ENCODE measurements at regions of chr4 and their contacts with region 1.

Region 1: DNA sequence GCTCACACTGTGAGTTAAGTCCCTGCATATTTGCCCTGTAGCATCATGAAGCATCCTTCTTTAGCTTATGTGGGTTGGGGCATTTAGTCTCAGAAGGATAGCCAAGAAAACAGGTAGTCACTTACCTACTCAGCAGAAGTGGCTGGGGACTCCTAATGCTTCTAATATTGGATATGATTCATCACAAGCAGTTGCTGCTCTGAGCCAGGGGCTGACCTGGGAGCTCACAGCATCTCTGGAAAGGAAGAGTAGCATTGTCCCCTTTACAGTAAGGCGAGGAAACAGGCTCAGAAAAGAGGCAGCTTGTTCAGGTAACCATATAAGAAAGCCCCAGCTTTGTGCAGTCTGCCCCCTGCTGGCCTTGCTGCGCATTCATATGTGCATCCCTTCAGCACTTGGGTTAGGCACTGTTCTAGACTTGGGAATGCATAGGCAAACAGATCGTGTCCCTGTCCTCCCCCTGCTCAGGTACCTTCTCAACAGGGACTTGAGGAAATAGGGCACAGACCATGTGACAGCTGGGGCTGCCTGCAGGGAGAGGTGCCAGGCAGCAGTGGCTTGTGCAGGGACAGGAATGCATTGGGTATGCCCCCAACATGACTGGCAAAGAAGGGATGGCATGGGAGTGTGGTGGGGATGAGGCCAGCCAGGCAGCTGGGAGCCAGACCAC is 35.7 kb upstream of the TBC1D14 start:
- DNase-seq: peak; percentile 86
- H3K4me3 Mint-ChIP-seq: no peak overlapping the region
- H3K27ac Mint-ChIP-seq: no peak overlapping the region
- H3K4me1 Mint-ChIP-seq: no peaks in the 10 kb centered on the region
- H3K27me3 Mint-ChIP-seq: no peaks in the 10 kb centered on the region

Region 2: GRCh38 chr4:6591313-6591712 is 282.6 kb before region 1 on chr4:
- CTCF ChIA-PET with region 1: no interaction called
- POLR2A ChIA-PET with region 1: no interaction called
- intact Hi-C with region 1: no loop called
- DNase-seq: no peak
- H3K4me3 Mint-ChIP-seq: no peak overlapping the region
- H3K27ac Mint-ChIP-seq: no peak overlapping the region
- H3K4me1 Mint-ChIP-seq: no peaks in the 10 kb centered on the region
- H3K27me3 Mint-ChIP-seq: no peaks in the 10 kb centered on the region

Region 3: GRCh38 chr4:6716018-6716911 is 157.7 kb before region 1 on chr4 and contains the start of gene BLOC1S4:
- CTCF ChIA-PET with region 1: interaction called, 252 read pairs
- POLR2A ChIA-PET with region 1: interaction called, 4 read pairs
- intact Hi-C with region 1: loop called (anchors 1 kb)
- DNase-seq: peak; percentile 92
- H3K4me3 Mint-ChIP-seq: peak within 1 kb of the TSS; percentile 90
- H3K27ac Mint-ChIP-seq: peak within 1 kb of the TSS; percentile 97
- H3K4me1 Mint-ChIP-seq: peaks cover 27% of the 10 kb centered on the region
- H3K27me3 Mint-ChIP-seq: peaks cover 3% of the 10 kb centered on the region
- total RNA-seq, gene BLOC1S4: 17.0 to 19.7 TPM

Region 4: GRCh38 chr4:6783053-6783981 is 90.6 kb before region 1 on chr4:
- CTCF ChIA-PET with region 1: interaction called, 27 read pairs
- POLR2A ChIA-PET with region 1: interaction called, 5 read pairs
- intact Hi-C with region 1: loop called (anchors 1 kb)
- DNase-seq: peak; percentile 94
- H3K4me3 Mint-ChIP-seq: peak overlapping the region; percentile 80
- H3K27ac Mint-ChIP-seq: peak overlapping the region; percentile 77
- H3K4me1 Mint-ChIP-seq: peaks cover 47% of the 10 kb centered on the region
- H3K27me3 Mint-ChIP-seq: no peaks in the 10 kb centered on the region

Region 5: DNA sequence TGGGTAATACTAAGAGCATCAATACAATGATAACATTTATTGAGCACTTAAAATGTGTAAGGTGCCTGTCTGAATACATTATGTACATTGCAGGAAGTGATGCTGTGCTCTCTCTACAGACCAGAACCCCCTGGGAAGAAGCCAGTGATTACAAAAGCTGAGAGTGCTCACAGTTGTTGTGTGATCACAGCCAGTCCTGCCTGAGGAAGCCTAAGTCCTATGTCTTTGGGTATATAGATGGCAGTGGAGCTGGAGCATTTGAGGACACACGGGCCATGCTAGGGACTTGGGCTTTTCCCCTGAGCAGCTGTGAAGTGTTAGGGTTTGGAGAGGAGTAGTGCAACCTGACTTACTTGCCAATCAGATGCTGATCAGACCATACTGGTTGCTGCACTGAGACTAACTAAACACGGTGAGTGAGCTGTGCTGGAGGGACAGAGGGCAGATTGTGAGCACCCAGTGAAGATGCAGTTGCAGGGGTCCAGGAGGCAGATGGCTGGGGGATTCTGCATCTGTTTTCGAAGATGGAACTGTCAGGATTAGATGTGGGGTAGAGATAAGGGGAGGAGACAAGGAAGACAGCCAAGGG is 25.1 kb before region 1 on chr4:
- CTCF ChIA-PET with region 1: interaction called, 19 read pairs
- POLR2A ChIA-PET with region 1: no interaction called
- intact Hi-C with region 1: no loop called
- DNase-seq: no peak
- H3K4me3 Mint-ChIP-seq: no peak overlapping the region
- H3K27ac Mint-ChIP-seq: no peak overlapping the region
- H3K4me1 Mint-ChIP-seq: peaks cover 11% of the 10 kb centered on the region
- H3K27me3 Mint-ChIP-seq: no peaks in the 10 kb centered on the region

Region 6: GRCh38 chr4:6892190-6892908 is 18.4 kb after region 1 on chr4:
- CTCF ChIA-PET with region 1: interaction called, 46 read pairs
- POLR2A ChIA-PET with region 1: no interaction called
- intact Hi-C with region 1: no loop called
- DNase-seq: peak; percentile 63
- H3K4me3 Mint-ChIP-seq: no peak overlapping the region
- H3K27ac Mint-ChIP-seq: peak overlapping the region; percentile 66
- H3K4me1 Mint-ChIP-seq: peaks cover 25% of the 10 kb centered on the region
- H3K27me3 Mint-ChIP-seq: no peaks in the 10 kb centered on the region

Region 7: GRCh38 chr4:7029212-7029611 is 155.3 kb after region 1 on chr4:
- CTCF ChIA-PET with region 1: no interaction called
- POLR2A ChIA-PET with region 1: no interaction called
- intact Hi-C with region 1: no loop called
- DNase-seq: no peak
- H3K4me3 Mint-ChIP-seq: no peak overlapping the region
- H3K27ac Mint-ChIP-seq: no peak overlapping the region
- H3K4me1 Mint-ChIP-seq: no peaks in the 10 kb centered on the region
- H3K27me3 Mint-ChIP-seq: no peaks in the 10 kb centered on the region

Region 8: GRCh38 chr4:7067452-7068278 is 193.7 kb after region 1 on chr4 and contains the start of gene GRPEL1:
- CTCF ChIA-PET with region 1: interaction called, 19 read pairs
- POLR2A ChIA-PET with region 1: no interaction called
- intact Hi-C with region 1: no loop called
- DNase-seq: peak; percentile 100
- H3K4me3 Mint-ChIP-seq: peak within 1 kb of the TSS; percentile 95
- H3K27ac Mint-ChIP-seq: peak within 1 kb of the TSS; percentile 87
- H3K4me1 Mint-ChIP-seq: peaks cover 47% of the 10 kb centered on the region
- H3K27me3 Mint-ChIP-seq: peaks cover 2% of the 10 kb centered on the region
- total RNA-seq, gene GRPEL1: 63.8 to 68.7 TPM